ENCODE measurements at regions of chr3 and their contacts with region 1.

Region 1: GRCh38 chr3:16060358-16060852 is 114.1 kb upstream of the GALNT15 start:
- DNase-seq: no peak
- ATAC-seq: peak in 6 of 8 donors; percentile 57 to 87 (median 80)
- H3K4me3 ChIP-seq: no peak overlapping the region
- H3K27ac ChIP-seq: peak overlapping the region in 7 of 10 donors; percentile 45 to 79 (median 69)
- H3K4me1 ChIP-seq: peaks cover 0 to 47% (median 31%) of the 10 kb centered on the region in 9 donors
- H3K27me3 ChIP-seq: no peaks in the 10 kb centered on the region
- CTCF ChIP-seq: peak in 2 of 9 donors; percentile 13 to 17

Region 2: DNA sequence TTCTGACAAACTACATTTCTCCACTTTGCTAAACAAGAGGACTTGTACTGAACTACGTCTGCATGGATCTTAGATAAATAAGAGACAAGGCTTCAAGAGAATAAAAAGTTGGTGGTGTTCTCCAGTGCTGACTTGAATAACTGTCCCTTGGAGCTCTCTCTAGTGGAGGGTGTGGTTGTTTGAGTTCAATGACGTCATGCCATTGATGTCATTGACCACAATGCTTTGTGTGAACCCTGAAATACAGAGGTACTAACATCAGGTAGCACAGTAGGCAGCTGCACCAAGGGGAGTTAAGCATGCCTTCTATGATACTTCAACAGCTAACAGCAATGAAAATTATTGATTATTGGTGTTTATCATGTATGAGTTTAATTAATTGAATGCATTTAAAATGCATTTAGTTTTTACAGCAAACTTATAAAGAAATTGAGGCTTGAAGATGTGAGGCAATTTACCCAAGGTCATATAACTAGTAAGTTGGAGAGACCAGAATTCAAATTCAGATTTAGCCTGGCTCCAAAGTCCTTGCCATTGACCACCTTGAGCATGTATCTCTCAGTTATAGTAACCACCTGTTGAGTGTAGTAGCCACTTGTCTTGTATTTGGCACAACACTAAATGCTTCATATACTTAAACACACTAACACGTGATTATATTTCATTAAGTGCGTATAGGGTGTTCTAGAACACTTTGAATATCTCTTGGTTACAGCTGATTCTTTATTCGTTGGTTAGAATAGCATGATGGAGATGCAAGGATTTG is 136.6 kb before region 1 on chr3:
- intact Hi-C with region 1: no loop called
- DNase-seq: no peak
- ATAC-seq: no peak
- H3K4me3 ChIP-seq: no peak overlapping the region
- H3K27ac ChIP-seq: no peak overlapping the region
- H3K4me1 ChIP-seq: no peaks in the 10 kb centered on the region
- H3K27me3 ChIP-seq: no peaks in the 10 kb centered on the region
- CTCF ChIP-seq: no peak

Region 3: DNA sequence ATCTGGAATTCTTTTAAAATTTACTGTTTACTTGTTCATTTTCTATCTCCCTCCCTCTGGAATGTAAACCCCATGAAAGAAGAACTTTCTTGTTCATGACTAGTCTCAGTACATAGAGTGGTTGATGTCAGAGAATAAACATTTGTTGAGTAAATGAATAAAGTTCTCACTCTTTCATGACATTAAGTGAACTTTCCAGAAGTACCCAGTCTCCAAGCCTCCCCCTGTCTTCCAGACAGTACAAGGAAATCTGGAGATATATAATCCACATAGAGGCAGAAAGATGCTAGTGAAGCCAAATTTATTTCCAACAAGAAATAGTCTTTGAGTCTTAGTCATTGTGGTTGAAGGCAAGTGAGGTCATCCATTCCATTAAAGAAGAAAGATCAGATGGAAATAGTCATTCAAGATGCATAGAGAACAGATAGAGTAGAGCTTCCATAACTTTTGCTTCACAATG is 42.5 kb after region 1 on chr3:
- intact Hi-C with region 1: loop called in 2 of 10 experiments (anchors 5 kb)
- DNase-seq: no peak
- ATAC-seq: peak in 7 of 8 donors; percentile 21 to 76 (median 70)
- H3K4me3 ChIP-seq: no peak overlapping the region
- H3K27ac ChIP-seq: peak overlapping the region in 6 of 10 donors; percentile 14 to 52 (median 40)
- H3K4me1 ChIP-seq: peaks cover 0 to 10% (median 2%) of the 10 kb centered on the region in 9 donors
- H3K27me3 ChIP-seq: no peaks in the 10 kb centered on the region
- CTCF ChIP-seq: peak in 1 of 9 donors; percentile 6

Region 4: DNA sequence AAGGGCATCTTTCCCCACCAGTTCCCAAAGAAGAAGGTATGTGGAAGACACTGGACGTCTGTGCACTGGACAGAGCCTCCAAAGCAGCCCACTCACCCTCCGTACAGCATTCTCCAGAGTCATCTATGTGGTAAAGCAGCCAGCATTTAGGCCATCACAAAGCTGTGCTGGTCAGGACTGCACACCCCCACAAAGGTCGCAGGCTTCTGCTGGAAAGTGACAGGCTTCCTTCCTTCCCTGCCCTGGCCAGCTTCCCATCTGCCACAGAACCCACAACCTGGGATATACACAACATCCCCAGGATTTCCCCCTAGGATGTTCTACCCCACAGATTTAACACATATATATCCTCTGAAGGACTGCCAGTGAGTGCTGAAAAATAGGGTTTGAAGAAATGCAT is 49.5 kb after region 1 on chr3:
- intact Hi-C with region 1: loop called in 1 of 10 experiments (anchors 5 kb)
- DNase-seq: no peak
- ATAC-seq: peak in 7 of 8 donors; percentile 17 to 68 (median 44)
- H3K4me3 ChIP-seq: no peak overlapping the region
- H3K27ac ChIP-seq: peak overlapping the region in 4 of 10 donors; percentile 22 to 44 (median 30)
- H3K4me1 ChIP-seq: peaks cover 0 to 28% (median 0%) of the 10 kb centered on the region in 9 donors
- H3K27me3 ChIP-seq: no peaks in the 10 kb centered on the region
- CTCF ChIP-seq: no peak

Region 5: DNA sequence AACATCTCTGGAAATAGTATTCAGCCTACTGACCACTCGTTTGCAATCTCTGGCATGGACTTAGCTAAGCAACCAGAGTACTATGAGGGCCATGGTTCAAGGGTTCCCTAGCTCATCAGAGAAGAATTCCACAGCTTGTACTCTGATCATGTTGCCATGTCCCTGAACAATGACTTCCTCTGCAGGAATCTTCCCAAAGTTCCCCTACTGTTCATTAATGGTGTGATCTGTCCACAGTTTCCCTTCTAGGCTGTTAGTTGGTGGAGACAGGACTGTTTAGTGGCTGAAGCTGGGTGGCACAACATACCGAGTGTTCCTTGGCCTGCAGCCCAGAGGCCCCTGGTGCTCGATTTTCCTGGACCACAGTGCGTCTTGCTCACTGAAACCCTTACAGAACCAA is 69.7 kb after region 1 on chr3:
- intact Hi-C with region 1: loop called in 1 of 10 experiments (anchors 5 kb)
- DNase-seq: no peak
- ATAC-seq: peak in 4 of 8 donors; percentile 19 to 52 (median 34)
- H3K4me3 ChIP-seq: no peak overlapping the region
- H3K27ac ChIP-seq: peak overlapping the region in 5 of 10 donors; percentile 15 to 44 (median 32)
- H3K4me1 ChIP-seq: peaks cover 0 to 46% (median 30%) of the 10 kb centered on the region in 9 donors
- H3K27me3 ChIP-seq: no peaks in the 10 kb centered on the region
- CTCF ChIP-seq: no peak

Region 6: DNA sequence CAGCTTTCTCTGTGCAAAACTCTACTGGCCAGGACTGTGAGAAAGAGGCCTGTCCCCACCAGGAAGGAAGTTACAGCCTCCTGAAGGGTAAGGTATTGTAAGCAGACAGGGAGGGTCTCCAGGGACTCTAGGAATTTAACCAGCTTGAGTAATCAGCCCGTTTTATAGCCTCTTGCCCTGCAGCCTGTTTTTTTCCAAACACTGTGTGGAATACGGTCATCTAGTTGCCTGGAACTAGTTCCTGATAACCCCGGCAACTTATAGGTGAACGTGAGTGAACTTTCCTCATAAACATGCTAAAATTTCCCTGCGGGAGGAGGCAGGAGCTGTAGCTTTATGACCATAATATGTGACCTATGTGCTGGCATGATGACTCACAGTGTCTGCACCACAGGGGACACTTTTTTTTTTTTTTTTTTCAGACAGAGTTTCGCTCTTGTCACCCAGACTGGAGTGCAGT is 604.9 kb after region 1 on chr3:
- intact Hi-C with region 1: no loop called
- DNase-seq: no peak
- ATAC-seq: peak; percentile 41 to 80 (median 60)
- H3K4me3 ChIP-seq: no peak overlapping the region
- H3K27ac ChIP-seq: no peak overlapping the region
- H3K4me1 ChIP-seq: peaks cover 0 to 13% (median 0%) of the 10 kb centered on the region in 9 donors
- H3K27me3 ChIP-seq: no peaks in the 10 kb centered on the region
- CTCF ChIP-seq: no peak